Naive thymus-derived CD8-positive, alpha-beta T cell (primary cell): ENCODE measurements at regions of chr7 and their contacts with region 1.

Region 1: GRCh38 chr7:149854611-149855360 is 16.6 kb downstream of the ZNF862 start:
- DNase-seq: peak in 4 of 10 donors; percentile 31 to 70 (median 38)
- ATAC-seq: peak; percentile 71 to 78
- H3K4me3 Mint-ChIP-seq: peak overlapping the region in 8 of 10 donors; percentile 20 to 70 (median 58)
- H3K27ac Mint-ChIP-seq: peak overlapping the region; percentile 47 to 84 (median 67)
- H3K4me1 Mint-ChIP-seq: peaks cover 36 to 66% (median 57%) of the 10 kb centered on the region in 4 donors
- H3K27me3 Mint-ChIP-seq: no peaks in the 10 kb centered on the region

Region 2: DNA sequence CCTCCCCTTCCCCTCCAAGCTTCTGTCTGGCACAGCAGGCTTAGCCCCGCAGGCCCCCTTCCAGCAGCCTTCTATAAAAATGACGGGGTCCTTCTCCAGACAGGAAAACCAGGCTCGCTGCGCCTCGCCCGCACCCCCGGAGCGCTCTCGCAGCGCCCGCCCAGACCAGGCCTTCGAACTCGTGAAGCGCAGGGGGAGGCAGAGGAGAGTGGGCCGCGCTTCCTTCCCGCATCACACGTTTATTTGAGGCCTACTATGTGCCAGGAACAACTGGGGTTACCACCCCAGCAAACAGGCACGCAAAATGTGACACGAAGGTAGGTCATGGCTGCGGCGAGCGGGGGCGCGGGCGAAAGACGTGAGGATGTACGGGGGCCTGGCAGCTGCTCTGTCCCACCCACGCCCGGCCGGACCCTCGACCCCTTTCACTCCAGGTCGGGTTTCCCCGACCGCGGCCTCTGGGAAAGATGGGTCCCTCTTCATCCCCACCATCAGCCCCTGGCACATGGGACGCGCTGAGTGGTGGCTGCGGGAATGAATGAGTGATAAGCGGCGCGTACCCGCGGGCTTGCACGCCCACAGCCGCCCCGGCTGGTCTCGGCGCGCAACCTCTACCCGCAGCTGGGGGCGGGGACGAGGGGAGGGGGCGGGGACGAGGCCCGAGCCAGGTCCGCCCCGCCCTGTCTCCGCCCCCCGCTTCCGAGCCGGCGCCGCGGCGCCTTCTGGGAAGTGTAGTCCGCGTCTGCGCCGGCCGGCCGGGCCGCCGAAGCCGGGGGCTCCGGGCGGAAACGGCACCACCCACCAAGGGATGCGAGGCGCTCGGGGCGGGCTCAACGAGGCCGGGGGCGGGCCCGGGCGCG is 140.5 kb before region 1 on chr7:
- POLR2A ChIA-PET with region 1: no interaction called
- DNase-seq: peak; percentile 73 to 98 (median 86)
- ATAC-seq: peak; percentile 85 to 89
- H3K4me3 Mint-ChIP-seq: peak overlapping the region; percentile 67 to 87 (median 82)
- H3K27ac Mint-ChIP-seq: peak overlapping the region in 5 of 10 donors; percentile 33 to 76 (median 56)
- H3K4me1 Mint-ChIP-seq: peaks cover 18 to 20% (median 20%) of the 10 kb centered on the region in 4 donors
- H3K27me3 Mint-ChIP-seq: no peaks in the 10 kb centered on the region

Region 3: DNA sequence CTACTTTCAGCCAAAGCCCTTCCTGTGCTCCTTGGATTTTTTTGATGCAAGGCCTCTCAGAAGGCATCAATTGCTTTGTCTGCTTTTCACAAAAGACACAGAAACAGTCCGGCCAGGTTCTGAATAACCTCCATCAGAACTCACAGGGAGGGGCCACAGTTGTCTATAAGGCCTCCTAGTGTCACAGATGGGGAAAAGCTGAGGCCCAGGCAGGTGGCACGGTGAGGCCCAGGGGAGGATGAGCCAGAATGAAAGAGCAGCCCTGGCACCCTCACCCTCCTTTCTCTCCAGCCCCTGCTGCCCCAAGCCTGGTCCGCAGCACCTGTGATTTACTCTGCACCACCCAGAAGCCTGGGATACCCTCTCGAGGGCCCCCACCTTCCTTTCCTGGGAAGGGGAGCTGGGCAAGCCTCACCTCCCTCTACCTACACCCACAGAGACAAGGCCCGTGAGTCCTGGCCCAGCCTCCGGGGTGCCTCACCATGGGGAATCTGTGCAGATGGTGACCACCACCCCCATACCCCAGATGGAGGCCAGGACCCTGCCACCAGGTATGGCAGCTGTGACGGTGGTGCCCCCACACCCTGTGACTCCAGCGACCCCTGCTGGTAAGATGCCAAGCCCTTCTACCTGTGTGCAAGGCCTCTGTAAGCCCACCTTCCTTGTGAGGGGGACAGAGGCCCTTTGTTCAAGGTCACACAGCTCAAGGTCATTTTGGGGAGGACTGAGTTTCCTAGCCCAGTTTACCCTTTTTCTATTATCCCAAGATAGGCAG is 55.2 kb before region 1 on chr7:
- POLR2A ChIA-PET with region 1: no interaction called
- DNase-seq: peak; percentile 40 to 85 (median 64)
- ATAC-seq: peak; percentile 77 to 88
- H3K4me3 Mint-ChIP-seq: no peak overlapping the region
- H3K27ac Mint-ChIP-seq: peak overlapping the region in 2 of 10 donors; percentile 37 to 74
- H3K4me1 Mint-ChIP-seq: peaks cover 0 to 2% (median 0%) of the 10 kb centered on the region in 4 donors
- H3K27me3 Mint-ChIP-seq: no peaks in the 10 kb centered on the region

Region 4: GRCh38 chr7:149822353-149822943 is 32.3 kb before region 1 on chr7:
- POLR2A ChIA-PET with region 1: no interaction called
- DNase-seq: peak in 1 of 10 donors; percentile 56
- ATAC-seq: no peak
- H3K4me3 Mint-ChIP-seq: no peak overlapping the region
- H3K27ac Mint-ChIP-seq: peak overlapping the region in 1 of 10 donors; percentile 59
- H3K4me1 Mint-ChIP-seq: peaks cover 0 to 13% (median 5%) of the 10 kb centered on the region in 4 donors
- H3K27me3 Mint-ChIP-seq: no peaks in the 10 kb centered on the region

Region 5: GRCh38 chr7:149838224-149838947 is 16.4 kb before region 1 on chr7 and contains the start of gene ZNF862:
- POLR2A ChIA-PET with region 1: interaction called, 241 read pairs
- DNase-seq: peak; percentile 88 to 97 (median 95)
- ATAC-seq: peak; percentile 95 to 96
- H3K4me3 Mint-ChIP-seq: peak within 1 kb of the TSS; percentile 85 to 97 (median 93)
- H3K27ac Mint-ChIP-seq: peak within 1 kb of the TSS; percentile 30 to 95 (median 92)
- H3K4me1 Mint-ChIP-seq: peaks cover 28 to 46% (median 40%) of the 10 kb centered on the region in 4 donors
- H3K27me3 Mint-ChIP-seq: peaks cover 0 to 5% (median 0%) of the 10 kb centered on the region in 5 donors
- polyA plus RNA-seq, gene ZNF862: 6.1 to 10.6 (median 9.6) TPM

Region 6: DNA sequence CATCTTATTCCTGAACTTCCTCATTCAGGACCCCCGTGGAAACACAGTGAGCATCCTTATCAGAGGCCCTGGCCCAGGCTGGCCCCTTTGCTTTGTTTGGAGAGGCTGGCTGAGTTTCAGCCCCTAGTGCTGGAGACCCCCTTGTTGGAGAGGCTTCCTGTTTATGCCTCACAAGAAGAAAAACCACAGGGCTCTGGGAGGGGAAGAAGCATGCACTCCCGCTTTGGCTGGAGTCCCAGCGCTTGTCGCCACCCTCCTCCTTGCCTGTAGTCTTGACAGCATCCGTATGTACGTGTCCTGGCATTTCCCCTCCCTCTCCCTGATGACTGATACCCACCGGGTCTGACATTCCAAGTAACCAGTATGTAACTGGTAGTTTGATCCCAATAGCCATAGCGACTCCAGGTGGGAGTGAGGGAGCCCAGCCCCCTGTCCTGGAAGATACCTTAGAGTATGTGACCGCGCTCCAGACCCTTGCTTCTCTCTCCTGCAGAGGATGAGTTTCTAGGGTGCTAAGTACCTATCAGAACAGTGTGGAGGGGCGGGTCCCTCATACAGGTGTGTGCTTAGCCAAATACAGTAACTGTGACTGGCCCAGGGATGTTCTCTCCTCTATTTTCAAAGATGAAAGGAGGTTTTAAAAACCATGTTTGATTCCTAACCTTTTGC is 12.1 kb after region 1 on chr7:
- POLR2A ChIA-PET with region 1: interaction called, 45 read pairs
- DNase-seq: peak in 3 of 10 donors; percentile 22 to 34 (median 34)
- ATAC-seq: no peak
- H3K4me3 Mint-ChIP-seq: peak overlapping the region; percentile 60 to 87 (median 78)
- H3K27ac Mint-ChIP-seq: peak overlapping the region; percentile 91 to 99 (median 98)
- H3K4me1 Mint-ChIP-seq: peaks cover 45 to 99% (median 93%) of the 10 kb centered on the region in 4 donors
- H3K27me3 Mint-ChIP-seq: no peaks in the 10 kb centered on the region